Heart left ventricle (tissue), 16 donors: ENCODE measurements at regions of chr20 and their contacts with region 1.

Region 1: GRCh38 chr20:60057123-60057801 is 99.0 kb downstream of the CDH26 start:
- DNase-seq: peak; percentile 56 to 73 (median 65)
- ATAC-seq: peak in 3 of 4 donors; percentile 44 to 61 (median 58)
- H3K4me3 ChIP-seq: peak overlapping the region in 1 of 12 donors; percentile 50
- H3K27ac ChIP-seq: peak overlapping the region in 2 of 12 donors; percentile 26 to 80
- H3K4me1 ChIP-seq: peaks cover 0 to 57% (median 17%) of the 10 kb centered on the region in 12 donors
- H3K27me3 ChIP-seq: peaks cover 0 to 5% (median 0%) of the 10 kb centered on the region in 9 donors
- CTCF ChIP-seq: peak; percentile 77 to 91 (median 86)
- POLR2A ChIP-seq: no peak

Region 2: GRCh38 chr20:60131375-60131774 is 74.1 kb after region 1 on chr20:
- intact Hi-C with region 1: no loop called
- DNase-seq: no peak
- ATAC-seq: peak in 2 of 4 donors; percentile 49 to 52
- H3K4me3 ChIP-seq: no peak overlapping the region
- H3K27ac ChIP-seq: no peak overlapping the region
- H3K4me1 ChIP-seq: peaks cover 0 to 23% (median 0%) of the 10 kb centered on the region in 12 donors
- H3K27me3 ChIP-seq: peaks cover 0 to 3% (median 0%) of the 10 kb centered on the region in 9 donors
- CTCF ChIP-seq: no peak
- POLR2A ChIP-seq: no peak

Region 3: GRCh38 chr20:60262967-60263603 is 205.8 kb after region 1 on chr20:
- intact Hi-C with region 1: loop called in 8 of 10 experiments (anchors 5 to 10 kb)
- DNase-seq: no peak
- ATAC-seq: peak in 1 of 4 donors; percentile 44
- H3K4me3 ChIP-seq: no peak overlapping the region
- H3K27ac ChIP-seq: no peak overlapping the region
- H3K4me1 ChIP-seq: no peaks in the 10 kb centered on the region
- H3K27me3 ChIP-seq: peaks cover 0 to 19% (median 0%) of the 10 kb centered on the region in 9 donors
- CTCF ChIP-seq: peak; percentile 20 to 72 (median 56)
- POLR2A ChIP-seq: no peak

Region 4: GRCh38 chr20:61220160-61220559 is 1162.9 kb after region 1 on chr20:
- intact Hi-C with region 1: loop called in 1 of 10 experiments (anchors 5 kb)
- DNase-seq: no peak
- ATAC-seq: no peak
- H3K4me3 ChIP-seq: no peak overlapping the region
- H3K27ac ChIP-seq: no peak overlapping the region
- H3K4me1 ChIP-seq: no peaks in the 10 kb centered on the region
- H3K27me3 ChIP-seq: peaks cover 0 to 36% (median under 1%) of the 10 kb centered on the region in 9 donors
- CTCF ChIP-seq: no peak
- POLR2A ChIP-seq: no peak

Region 5: GRCh38 chr20:61886721-61887594 is 1829.7 kb after region 1 on chr20:
- intact Hi-C with region 1: loop called in 2 of 10 experiments (anchors 5 to 10 kb)
- DNase-seq: peak in 1 of 5 donors; percentile 60
- ATAC-seq: peak in 2 of 4 donors; percentile 39 to 62
- H3K4me3 ChIP-seq: no peak overlapping the region
- H3K27ac ChIP-seq: no peak overlapping the region
- H3K4me1 ChIP-seq: peaks cover 0 to 4% (median 0%) of the 10 kb centered on the region in 12 donors
- H3K27me3 ChIP-seq: peaks cover 0 to 55% (median 5%) of the 10 kb centered on the region in 9 donors
- CTCF ChIP-seq: peak; percentile 45 to 67 (median 54)
- POLR2A ChIP-seq: no peak